OCI-LY7 (cell line): ENCODE measurements at regions of chr18 and their contacts with region 1.

Region 1: GRCh38 chr18:27577752-27578151 is 392.6 kb upstream of the CHST9 start:
- DNase-seq: no peak
- H3K4me3 ChIP-seq: no peak overlapping the region
- H3K27ac ChIP-seq: no peak overlapping the region
- H3K4me1 ChIP-seq: no peaks in the 10 kb centered on the region
- CTCF ChIP-seq: no peak

Region 2: GRCh38 chr18:27627927-27628326 is 50.2 kb after region 1 on chr18:
- CTCF ChIA-PET with region 1: no interaction called
- POLR2A ChIA-PET with region 1: no interaction called
- intact Hi-C with region 1: loop called (anchors 10 kb)
- DNase-seq: no peak
- H3K4me3 ChIP-seq: no peak overlapping the region
- H3K27ac ChIP-seq: no peak overlapping the region
- H3K4me1 ChIP-seq: no peaks in the 10 kb centered on the region
- CTCF ChIP-seq: no peak